Dendritic cell treated with granulocyte-macrophage colony-stimulating factor and Interleukin-4, amounts not matched to agents 40 ng/mL and 50 ng/mL, for 4 days (primary cell): ENCODE measurements at regions of chr11 and their contacts with region 1.

Region 1: DNA sequence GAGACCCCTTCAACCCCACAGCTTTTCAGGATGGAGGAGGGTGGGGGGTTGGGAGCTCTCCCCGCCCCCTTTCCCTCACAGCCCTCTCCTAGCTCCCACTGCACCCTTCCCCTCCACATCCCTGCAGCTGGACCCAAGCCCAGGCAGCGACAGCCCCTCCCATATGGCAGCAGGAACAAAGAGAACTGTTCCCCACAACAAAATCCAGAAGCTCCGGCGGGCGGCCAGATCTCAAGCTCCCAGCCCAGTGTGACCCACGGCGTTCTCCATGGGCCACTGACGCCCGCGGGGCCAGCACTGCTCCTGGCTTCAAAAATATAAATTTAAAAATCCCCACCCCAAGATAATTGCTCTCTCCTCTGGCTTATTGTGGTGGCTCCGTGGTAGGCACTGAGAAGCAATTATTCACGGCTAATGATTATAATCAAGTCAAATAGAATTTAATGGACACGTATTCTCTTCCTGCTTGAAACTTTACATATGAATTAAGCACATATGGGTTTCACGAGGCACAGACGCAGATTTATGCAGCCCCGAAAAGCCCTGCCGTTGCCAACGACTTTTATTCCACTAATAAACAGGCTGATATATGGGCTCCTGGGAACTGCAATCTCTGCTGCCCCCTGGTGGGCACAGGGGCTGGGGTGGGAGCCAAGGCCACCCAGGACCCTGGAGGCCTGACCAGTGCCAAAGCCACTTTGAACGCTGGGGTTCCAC is 17.6 kb downstream of the MACROD1 start:
- H3K4me3 Mint-ChIP-seq: no peak overlapping the region
- H3K27ac Mint-ChIP-seq: no peak overlapping the region
- H3K4me1 Mint-ChIP-seq: peaks cover 21% of the 10 kb centered on the region
- H3K27me3 Mint-ChIP-seq: peaks cover 20% of the 10 kb centered on the region

Region 2: DNA sequence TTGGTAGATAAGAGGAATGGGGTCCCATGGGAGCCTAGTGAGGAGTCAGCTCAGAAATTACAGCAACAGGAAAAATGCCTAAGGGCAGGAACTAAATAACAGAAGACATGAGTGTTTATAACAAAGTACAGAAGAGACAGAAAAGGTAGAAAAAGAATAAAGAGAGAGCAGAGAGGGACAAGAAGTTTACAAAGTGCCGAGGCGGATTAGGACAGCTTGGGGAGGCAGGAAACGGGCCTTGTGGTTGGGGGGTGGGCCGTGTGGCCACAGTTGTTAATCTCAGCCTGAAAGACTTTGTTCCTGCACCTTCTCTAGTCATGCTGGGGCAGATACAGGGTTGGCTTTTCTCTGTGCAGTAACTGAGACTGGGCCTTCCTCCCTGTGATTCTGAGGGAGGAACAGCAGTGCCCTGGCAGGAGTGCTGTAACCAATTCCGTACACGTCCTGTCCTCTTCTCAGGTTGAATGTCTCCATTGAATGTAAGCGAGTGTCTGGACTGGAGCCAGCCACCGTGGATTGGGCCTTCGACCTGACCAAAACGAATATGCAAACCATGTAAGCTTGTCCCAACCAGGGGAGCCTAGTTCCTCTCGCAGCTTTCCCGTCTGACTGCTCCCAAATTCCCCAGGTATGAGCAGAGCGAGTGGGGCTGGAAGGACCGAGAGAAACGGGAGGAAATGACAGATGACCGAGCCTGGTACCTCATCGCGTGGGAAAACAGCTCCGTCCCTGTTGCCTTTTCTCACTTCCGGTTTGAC is 196.4 kb before region 1 on chr11:
- intact Hi-C with region 1: no loop called
- H3K4me3 Mint-ChIP-seq: no peak overlapping the region
- H3K27ac Mint-ChIP-seq: no peak overlapping the region
- H3K4me1 Mint-ChIP-seq: no peaks in the 10 kb centered on the region
- H3K27me3 Mint-ChIP-seq: no peaks in the 10 kb centered on the region

Region 3: DNA sequence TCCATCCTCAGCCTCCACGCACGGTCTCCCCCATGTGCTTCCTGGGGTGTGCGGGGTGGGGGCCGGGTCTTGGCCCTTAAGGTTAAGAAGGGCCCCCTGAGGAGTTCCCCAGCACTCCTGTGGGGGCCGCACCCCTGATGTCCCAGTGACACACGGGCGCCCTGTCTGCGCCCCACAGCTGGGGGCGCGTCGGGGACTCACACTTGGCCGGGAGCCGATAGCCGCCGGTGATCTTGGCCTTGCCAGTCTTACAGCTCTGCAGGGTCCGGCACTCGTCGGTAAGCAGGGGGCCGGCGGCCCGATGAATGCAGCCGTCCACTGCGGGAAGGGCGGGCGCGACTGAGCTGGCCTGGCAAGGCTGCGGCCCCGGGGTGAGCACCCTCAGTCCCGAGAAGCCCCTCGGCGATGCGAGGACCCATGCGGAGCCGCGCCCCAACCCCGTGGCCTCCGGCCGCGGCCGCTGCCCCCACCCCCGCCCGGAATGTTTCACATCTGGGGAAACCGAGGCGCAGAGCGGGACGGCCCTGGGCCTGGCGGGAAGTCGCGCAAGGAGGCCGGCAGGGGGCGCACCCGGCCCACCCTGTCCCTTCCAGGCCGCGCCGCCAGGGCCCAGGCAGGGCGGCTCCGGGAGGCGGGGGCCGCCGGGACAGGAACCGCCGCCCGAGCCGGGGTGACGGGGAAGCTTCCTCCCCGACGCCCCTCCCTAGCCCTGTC is 148.2 kb before region 1 on chr11:
- intact Hi-C with region 1: loop called (anchors 1 kb)
- H3K4me3 Mint-ChIP-seq: peak overlapping the region; percentile 47
- H3K27ac Mint-ChIP-seq: no peak overlapping the region
- H3K4me1 Mint-ChIP-seq: peaks cover 69% of the 10 kb centered on the region
- H3K27me3 Mint-ChIP-seq: peaks cover 72% of the 10 kb centered on the region

Region 4: GRCh38 chr11:64040684-64041322 is 107.6 kb before region 1 on chr11:
- intact Hi-C with region 1: loop called (anchors 5 kb)
- H3K4me3 Mint-ChIP-seq: no peak overlapping the region
- H3K27ac Mint-ChIP-seq: no peak overlapping the region
- H3K4me1 Mint-ChIP-seq: peaks cover 5% of the 10 kb centered on the region
- H3K27me3 Mint-ChIP-seq: peaks cover 60% of the 10 kb centered on the region

Region 5: DNA sequence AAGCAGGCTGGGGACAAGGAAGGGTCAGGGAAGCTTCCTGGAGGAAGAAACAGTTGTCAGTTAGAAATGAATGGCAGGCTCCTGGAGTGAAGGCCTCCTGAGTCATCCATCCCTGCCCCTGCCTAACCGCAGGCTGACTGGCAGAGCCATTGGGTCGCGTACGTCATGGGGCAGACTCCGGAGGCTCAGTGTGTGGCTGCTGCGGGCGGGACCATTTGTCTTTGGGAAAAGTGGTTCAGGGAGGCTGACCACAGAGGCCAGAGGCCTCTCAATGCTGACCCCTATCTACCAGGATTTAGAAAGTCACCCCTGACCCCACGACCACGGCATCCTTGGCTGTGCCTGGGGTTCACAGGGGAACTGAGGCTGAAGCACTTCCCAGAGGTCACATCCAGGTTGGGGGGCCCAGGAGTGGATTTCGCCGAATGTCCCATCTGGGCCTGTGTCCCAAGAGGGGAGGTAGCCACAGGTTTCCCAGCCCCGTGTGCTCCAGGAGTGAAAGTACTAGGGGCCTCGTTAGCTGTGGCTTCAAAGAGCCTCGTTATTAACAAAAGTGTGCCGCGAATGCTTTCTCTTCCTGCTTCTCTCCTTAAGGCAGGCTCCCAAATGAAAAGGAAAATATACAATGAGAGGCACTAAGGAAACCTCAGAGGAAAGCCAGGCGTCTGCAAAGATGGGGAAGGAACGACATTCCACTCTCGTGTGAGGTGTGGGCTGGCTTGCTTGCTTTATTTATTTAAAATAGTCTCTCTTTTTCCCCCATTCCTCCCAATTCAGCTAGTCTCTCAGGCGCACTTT is 53.7 kb before region 1 on chr11:
- intact Hi-C with region 1: no loop called
- H3K4me3 Mint-ChIP-seq: no peak overlapping the region
- H3K27ac Mint-ChIP-seq: peak overlapping the region; percentile 7
- H3K4me1 Mint-ChIP-seq: peaks cover 55% of the 10 kb centered on the region
- H3K27me3 Mint-ChIP-seq: peaks cover 20% of the 10 kb centered on the region